ENCODE measurements at regions of chr9 and their contacts with region 1.

Region 1: GRCh38 chr9:131349881-131350563 is 43.9 kb upstream of the PRRC2B start:
- DNase-seq: peak; percentile 58
- H3K4me3 ChIP-seq: peak overlapping the region in 2 of 3 experiments; percentile 21 to 41
- H3K27ac ChIP-seq: no peak overlapping the region
- H3K4me1 ChIP-seq: peaks cover 8% of the 10 kb centered on the region
- H3K27me3 ChIP-seq: no peaks in the 10 kb centered on the region
- CTCF ChIP-seq: peak; percentile 75 to 88

Region 2: DNA sequence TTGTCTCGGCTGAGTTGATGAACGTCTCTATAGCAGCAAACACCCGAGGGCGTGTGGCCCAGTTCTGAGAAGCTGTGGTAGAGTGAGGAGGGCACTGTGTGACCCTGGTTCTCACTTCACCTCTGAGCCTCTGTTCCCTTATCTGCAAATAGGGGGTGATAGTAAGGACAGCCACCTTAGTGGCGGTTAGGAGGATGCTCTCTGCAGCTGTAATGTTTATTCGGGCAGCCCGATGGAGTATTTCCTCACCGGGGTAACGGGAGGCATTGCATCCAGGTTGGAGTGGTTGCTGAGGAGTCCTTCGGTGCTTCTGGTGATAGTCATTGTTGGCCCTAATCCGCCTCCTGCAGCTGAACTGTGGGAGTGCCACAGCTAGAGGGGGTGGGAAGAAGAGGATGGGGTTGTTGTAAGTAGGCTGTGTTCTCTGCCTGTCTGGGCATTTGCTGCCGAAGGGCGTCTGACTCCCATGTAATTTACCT is 57.7 kb after region 1 on chr9:
- CTCF ChIA-PET with region 1: no interaction called
- dilution Hi-C with region 1: no loop called
- in situ Hi-C with region 1: loop called in 1 of 2 experiments (anchors 10 kb)
- intact Hi-C with region 1: loop called (anchors 1 kb)
- DNase-seq: peak; percentile 73
- H3K4me3 ChIP-seq: peak overlapping the region in 2 of 3 experiments; percentile 6 to 16
- H3K27ac ChIP-seq: peak overlapping the region; percentile 44
- H3K4me1 ChIP-seq: peaks cover 60% of the 10 kb centered on the region
- H3K27me3 ChIP-seq: no peaks in the 10 kb centered on the region
- CTCF ChIP-seq: peak; percentile 59 to 69

Region 3: DNA sequence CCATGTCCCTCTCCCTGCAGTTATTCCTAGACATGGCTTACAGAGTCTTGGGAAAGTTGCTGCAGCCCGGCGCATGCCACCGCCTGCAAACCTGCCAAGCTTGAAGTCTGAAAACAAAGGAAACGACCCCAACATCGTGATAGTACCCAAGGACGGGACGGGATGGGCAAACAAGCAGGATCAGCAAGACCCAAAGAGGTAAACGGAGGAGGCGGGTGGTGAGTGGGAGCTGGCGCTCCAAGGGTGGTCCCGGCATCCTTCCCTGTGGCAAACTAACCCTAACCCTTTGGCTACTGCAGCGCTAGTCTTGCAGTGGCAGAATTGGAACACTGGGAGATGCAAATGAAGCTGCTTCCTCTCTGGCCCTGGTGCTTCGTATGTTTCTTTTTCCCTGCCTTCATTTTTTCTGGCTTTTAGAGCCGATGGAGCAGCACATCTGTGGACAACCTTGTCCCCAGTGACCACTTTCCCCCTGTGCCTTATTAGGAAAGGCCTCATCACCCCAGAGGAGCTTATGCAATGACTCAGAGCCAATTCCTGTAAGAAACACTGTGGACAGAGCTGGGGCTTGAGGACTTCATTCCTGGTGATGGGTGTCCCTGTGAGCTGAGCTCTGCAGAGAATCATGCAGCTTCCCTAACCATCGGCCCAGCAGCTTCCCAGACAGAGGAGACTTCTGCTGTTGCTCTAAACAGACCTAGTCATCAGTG is 82.7 kb after region 1 on chr9:
- CTCF ChIA-PET with region 1: no interaction called
- dilution Hi-C with region 1: loop called (anchors 5 kb)
- in situ Hi-C with region 1: no loop called
- intact Hi-C with region 1: no loop called
- DNase-seq: peak; percentile 51
- H3K4me3 ChIP-seq: no peak overlapping the region
- H3K27ac ChIP-seq: no peak overlapping the region
- H3K4me1 ChIP-seq: peaks cover 25% of the 10 kb centered on the region
- H3K27me3 ChIP-seq: no peaks in the 10 kb centered on the region
- CTCF ChIP-seq: no peak

Region 4: DNA sequence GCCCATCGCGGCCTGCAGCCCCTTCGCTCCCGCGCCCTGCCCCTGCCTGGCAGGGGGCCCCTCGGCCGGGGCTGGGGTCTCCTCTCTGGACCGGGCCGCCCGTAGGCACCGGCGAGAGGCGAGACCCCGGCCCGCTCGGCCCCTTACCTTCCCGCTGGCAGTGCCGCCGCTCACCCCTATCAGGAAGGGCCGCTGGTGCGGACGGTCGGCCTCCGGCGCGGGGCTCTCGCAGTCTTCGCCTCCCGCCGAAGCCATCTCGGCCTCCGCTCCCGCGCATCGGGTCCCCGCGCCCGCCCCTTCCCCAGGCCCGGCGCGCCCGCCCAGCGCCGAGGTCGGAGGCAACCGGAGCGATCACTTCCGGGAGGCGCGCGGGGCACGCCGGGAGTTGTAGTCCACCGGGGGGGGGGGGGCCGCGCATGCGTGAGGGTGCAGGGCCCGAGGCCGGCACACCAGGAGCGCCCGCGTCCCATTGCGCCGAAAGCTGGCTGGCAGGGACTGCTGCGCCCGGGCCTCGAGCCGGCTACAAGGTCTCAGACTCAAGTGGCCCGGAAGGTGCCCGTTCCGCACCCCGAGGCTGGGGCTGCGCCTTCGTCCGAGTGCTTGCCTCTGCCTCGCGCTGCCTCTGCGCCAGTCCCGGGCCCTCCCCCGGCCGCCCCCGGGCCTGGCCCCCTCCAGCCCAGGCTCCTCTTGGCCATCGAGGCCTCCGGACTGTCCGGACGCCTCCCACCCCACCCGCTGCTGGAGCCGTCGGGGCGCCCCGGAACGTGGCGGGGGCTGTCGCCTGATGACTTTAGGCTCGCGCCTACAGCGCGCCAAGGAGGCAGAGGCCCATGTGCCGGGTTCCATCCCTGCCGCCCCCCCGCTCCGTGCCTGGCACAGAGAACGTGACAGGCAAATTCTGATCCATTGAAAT is 181.2 kb after region 1 on chr9 and contains the start of gene UCK1:
- CTCF ChIA-PET with region 1: interaction called, 5 read pairs
- dilution Hi-C with region 1: no loop called
- in situ Hi-C with region 1: no loop called
- intact Hi-C with region 1: loop called (anchors 1 kb)
- DNase-seq: peak; percentile 69
- H3K4me3 ChIP-seq: peak within 1 kb of the TSS; percentile 63 to 90 (median 87)
- H3K27ac ChIP-seq: no peak within 1 kb of the TSS
- H3K4me1 ChIP-seq: peaks cover 15% of the 10 kb centered on the region
- H3K27me3 ChIP-seq: no peaks in the 10 kb centered on the region
- CTCF ChIP-seq: no peak
- total RNA-seq, gene UCK1: 17.5 to 21.7 TPM

Region 5: GRCh38 chr9:131747356-131747755 is 397.3 kb after region 1 on chr9:
- CTCF ChIA-PET with region 1: no interaction called
- dilution Hi-C with region 1: no loop called
- in situ Hi-C with region 1: loop called in 1 of 2 experiments (anchors 10 kb)
- intact Hi-C with region 1: loop called (anchors 1 kb)
- DNase-seq: peak; percentile 42
- H3K4me3 ChIP-seq: no peak overlapping the region
- H3K27ac ChIP-seq: no peak overlapping the region
- H3K4me1 ChIP-seq: peaks cover 9% of the 10 kb centered on the region
- H3K27me3 ChIP-seq: no peaks in the 10 kb centered on the region
- CTCF ChIP-seq: peak; percentile 50 to 71

Measured in mammary epithelial cell (primary cell).